Caco-2 (cell line): ENCODE measurements at regions of chr3 and their contacts with region 1.

Region 1: DNA sequence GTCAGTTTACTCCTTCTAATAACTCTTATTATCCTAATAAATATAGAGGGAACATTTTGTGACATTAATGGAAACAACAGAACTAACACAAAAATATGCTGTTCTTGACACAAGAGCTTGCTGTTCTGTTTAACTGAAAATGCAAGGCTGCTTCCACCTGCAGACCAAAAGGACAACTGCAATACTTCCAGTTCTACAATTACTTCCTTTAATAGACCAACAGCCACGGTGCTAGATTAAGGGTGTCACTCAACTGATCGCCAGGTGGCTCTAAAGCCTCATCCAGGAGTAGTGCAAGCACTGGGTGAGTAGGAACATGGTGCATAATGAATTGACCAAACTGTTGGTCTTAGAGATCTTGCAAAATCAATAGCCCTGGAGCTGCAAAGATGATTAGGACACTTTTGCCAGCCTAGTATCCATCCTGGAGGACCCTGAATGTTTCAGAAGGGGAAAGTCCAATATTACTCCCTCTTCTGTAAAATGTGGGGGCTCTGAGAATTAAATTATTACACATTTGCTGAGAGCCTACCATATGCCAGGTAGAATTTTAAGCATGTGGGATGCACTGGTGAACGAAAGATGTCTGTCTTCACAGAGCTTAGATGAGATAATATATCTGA is 3.6 kb upstream of the CLDN16 start:
- DNase-seq: peak; percentile 75 to 83
- H3K4me3 ChIP-seq: no peak overlapping the region
- H3K4me3 Mint-ChIP-seq: no peak overlapping the region
- H3K27ac Mint-ChIP-seq: no peak overlapping the region
- H3K4me1 ChIP-seq: no peaks in the 10 kb centered on the region
- H3K4me1 Mint-ChIP-seq: peaks cover 10% of the 10 kb centered on the region
- H3K27me3 ChIP-seq: no peaks in the 10 kb centered on the region
- H3K27me3 Mint-ChIP-seq: no peaks in the 10 kb centered on the region
- CTCF ChIP-seq: peak; percentile 65 to 73

Region 2: DNA sequence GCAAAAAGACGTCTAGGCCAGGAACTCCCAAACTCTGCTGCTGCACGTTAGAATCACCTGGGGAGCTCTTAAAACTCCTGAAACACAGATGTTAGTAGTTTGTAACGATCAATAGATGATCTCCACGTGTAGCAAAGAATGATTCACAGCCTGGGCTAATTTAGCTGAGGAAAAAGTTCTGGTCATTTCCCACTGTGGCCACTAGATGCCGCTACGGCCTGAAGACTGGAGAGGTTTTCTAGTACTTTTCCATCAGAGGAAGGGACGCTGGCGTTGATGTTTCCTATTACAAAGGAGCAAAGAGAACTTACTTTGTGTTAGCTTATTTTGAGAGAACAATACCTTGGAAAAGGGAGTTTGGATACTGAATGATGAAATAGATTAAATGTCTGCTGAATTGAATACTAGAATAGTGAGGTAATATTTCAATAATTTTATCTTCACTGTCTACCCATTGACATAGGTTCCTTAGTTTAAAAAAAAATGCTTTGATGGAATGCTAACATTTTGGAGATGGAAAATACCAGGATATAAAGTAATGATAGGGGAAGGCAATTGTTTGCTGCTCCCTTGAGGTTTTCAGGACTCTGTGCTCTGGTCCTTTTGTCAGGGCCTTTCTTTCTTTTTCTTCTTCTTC is 422.7 kb before region 1 on chr3:
- CTCF ChIA-PET with region 1: no interaction called
- POLR2A ChIA-PET with region 1: no interaction called
- intact Hi-C with region 1: loop called (anchors 1 kb)
- DNase-seq: peak; percentile 61 to 79
- H3K4me3 ChIP-seq: no peak overlapping the region
- H3K4me3 Mint-ChIP-seq: no peak overlapping the region
- H3K27ac Mint-ChIP-seq: no peak overlapping the region
- H3K4me1 ChIP-seq: no peaks in the 10 kb centered on the region
- H3K4me1 Mint-ChIP-seq: no peaks in the 10 kb centered on the region
- H3K27me3 ChIP-seq: no peaks in the 10 kb centered on the region
- H3K27me3 Mint-ChIP-seq: no peaks in the 10 kb centered on the region
- CTCF ChIP-seq: peak; percentile 82 to 90

Region 3: DNA sequence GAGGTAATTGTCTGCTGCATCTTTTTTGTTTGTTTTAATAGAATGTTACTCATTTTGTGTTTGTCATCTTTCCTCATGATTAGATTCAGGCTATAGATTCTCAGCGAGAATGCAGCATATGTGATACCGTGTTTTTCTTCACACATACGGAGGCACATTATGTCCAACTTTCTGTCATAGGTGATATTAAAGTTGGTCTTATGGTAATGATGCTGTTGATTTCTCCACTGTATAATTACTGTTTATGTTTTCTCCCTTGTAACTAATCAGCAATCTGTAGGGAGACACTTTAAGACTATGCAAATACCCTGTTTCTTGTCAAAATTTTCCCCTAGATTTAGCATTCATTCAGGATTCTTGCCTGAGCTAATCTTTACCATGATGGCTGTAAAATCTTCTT is 149.7 kb before region 1 on chr3:
- CTCF ChIA-PET with region 1: no interaction called
- POLR2A ChIA-PET with region 1: no interaction called
- intact Hi-C with region 1: no loop called
- DNase-seq: no peak
- H3K4me3 ChIP-seq: no peak overlapping the region
- H3K4me3 Mint-ChIP-seq: no peak overlapping the region
- H3K27ac Mint-ChIP-seq: no peak overlapping the region
- H3K4me1 ChIP-seq: no peaks in the 10 kb centered on the region
- H3K4me1 Mint-ChIP-seq: no peaks in the 10 kb centered on the region
- H3K27me3 ChIP-seq: no peaks in the 10 kb centered on the region
- H3K27me3 Mint-ChIP-seq: no peaks in the 10 kb centered on the region
- CTCF ChIP-seq: no peak

Region 4: GRCh38 chr3:190306513-190307165 is 77.7 kb before region 1 on chr3:
- CTCF ChIA-PET with region 1: no interaction called
- POLR2A ChIA-PET with region 1: no interaction called
- intact Hi-C with region 1: loop called (anchors 5 kb)
- DNase-seq: peak in 1 of 2 experiments; percentile 56
- H3K4me3 ChIP-seq: no peak overlapping the region
- H3K4me3 Mint-ChIP-seq: peak overlapping the region; percentile 45
- H3K27ac Mint-ChIP-seq: peak overlapping the region; percentile 79
- H3K4me1 ChIP-seq: peaks cover 62% of the 10 kb centered on the region
- H3K4me1 Mint-ChIP-seq: peaks cover 13% of the 10 kb centered on the region
- H3K27me3 ChIP-seq: no peaks in the 10 kb centered on the region
- H3K27me3 Mint-ChIP-seq: no peaks in the 10 kb centered on the region
- CTCF ChIP-seq: no peak

Region 5: DNA sequence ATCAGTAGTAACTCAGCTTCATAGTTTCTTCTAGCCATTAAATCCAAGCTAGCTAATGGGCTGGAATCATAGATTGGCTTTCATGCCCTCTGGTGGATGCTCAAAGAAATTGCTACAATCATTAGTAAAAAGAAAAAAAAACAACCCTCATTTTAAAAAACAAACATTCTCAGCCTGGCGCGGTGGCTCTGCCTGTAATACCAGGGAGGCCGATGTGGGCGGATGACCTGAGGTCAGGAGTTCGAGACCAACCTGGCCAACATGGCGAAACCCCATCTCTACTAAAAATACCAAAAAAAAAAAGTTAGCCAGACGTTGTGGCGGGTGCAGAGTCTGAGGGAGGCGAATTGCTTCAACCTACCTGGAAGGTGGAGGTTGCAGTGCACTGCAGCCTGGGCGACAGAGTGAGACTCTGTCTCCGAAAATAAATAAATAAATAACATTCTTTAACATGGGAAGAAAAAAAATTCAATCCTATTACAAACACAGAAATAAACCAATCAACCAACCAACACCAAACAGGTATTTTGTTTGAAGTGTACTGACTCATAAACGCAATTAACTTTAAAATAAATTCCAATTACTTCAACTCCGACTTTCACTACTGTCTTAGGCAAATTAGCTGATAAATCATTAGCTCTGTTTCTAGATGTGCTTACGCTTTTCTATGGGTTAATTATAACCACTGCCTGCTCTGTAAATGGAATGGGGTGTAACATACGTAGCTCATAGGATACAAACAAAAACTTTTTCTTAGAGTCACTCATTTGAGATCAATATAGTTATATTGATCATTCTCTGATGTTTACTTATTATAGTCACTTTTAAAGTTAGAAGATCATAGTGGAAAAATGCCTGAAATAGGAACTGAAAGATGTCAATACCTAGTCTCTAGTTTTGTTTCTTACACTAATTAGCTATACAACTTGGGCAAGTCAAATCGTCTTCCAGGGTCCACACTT is 40.4 kb after region 1 on chr3:
- CTCF ChIA-PET with region 1: interaction called, 12 read pairs
- POLR2A ChIA-PET with region 1: no interaction called
- intact Hi-C with region 1: loop called (anchors 1 kb)
- DNase-seq: peak; percentile 75 to 76
- H3K4me3 ChIP-seq: no peak overlapping the region
- H3K4me3 Mint-ChIP-seq: no peak overlapping the region
- H3K27ac Mint-ChIP-seq: no peak overlapping the region
- H3K4me1 ChIP-seq: no peaks in the 10 kb centered on the region
- H3K4me1 Mint-ChIP-seq: no peaks in the 10 kb centered on the region
- H3K27me3 ChIP-seq: no peaks in the 10 kb centered on the region
- H3K27me3 Mint-ChIP-seq: peaks cover 2% of the 10 kb centered on the region
- CTCF ChIP-seq: peak; percentile 57 to 66

Region 6: GRCh38 chr3:190467922-190468321 is 83.6 kb after region 1 on chr3:
- CTCF ChIA-PET with region 1: no interaction called
- POLR2A ChIA-PET with region 1: no interaction called
- intact Hi-C with region 1: no loop called
- DNase-seq: no peak
- H3K4me3 ChIP-seq: no peak overlapping the region
- H3K4me3 Mint-ChIP-seq: no peak overlapping the region
- H3K27ac Mint-ChIP-seq: no peak overlapping the region
- H3K4me1 ChIP-seq: no peaks in the 10 kb centered on the region
- H3K4me1 Mint-ChIP-seq: no peaks in the 10 kb centered on the region
- H3K27me3 ChIP-seq: no peaks in the 10 kb centered on the region; the same call in 1 of the 2 replicates
- H3K27me3 Mint-ChIP-seq: no peaks in the 10 kb centered on the region
- CTCF ChIP-seq: no peak

Region 7: DNA sequence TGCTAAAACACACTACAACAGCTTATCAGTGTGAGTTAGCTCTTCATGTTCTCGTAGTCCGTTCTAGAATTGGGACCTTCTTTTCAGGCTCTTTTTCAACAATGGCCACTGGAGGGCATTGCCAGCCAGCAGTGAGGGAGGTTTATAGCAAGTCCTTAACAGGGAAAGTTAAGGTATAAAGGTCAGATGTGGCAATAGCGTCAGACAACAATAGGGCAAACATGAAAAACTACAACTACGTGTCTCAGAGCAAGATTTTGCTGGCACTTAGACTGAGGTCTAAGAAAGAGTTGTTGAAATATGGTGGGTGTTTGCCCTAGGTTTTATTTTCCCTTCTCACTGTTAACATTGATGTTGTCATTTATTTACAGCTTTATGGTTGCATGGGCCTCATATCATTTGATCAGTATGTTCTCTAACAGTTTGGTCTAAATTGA is 316.8 kb after region 1 on chr3:
- CTCF ChIA-PET with region 1: no interaction called
- POLR2A ChIA-PET with region 1: no interaction called
- intact Hi-C with region 1: loop called (anchors 1 kb)
- DNase-seq: peak; percentile 69 to 73
- H3K4me3 ChIP-seq: no peak overlapping the region
- H3K4me3 Mint-ChIP-seq: no peak overlapping the region
- H3K27ac Mint-ChIP-seq: no peak overlapping the region
- H3K4me1 ChIP-seq: peaks cover 5% of the 10 kb centered on the region; the same call in 1 of the 2 replicates
- H3K4me1 Mint-ChIP-seq: no peaks in the 10 kb centered on the region
- H3K27me3 ChIP-seq: no peaks in the 10 kb centered on the region
- H3K27me3 Mint-ChIP-seq: peaks cover 5% of the 10 kb centered on the region
- CTCF ChIP-seq: peak; percentile 55 to 75